ENCODE measurements at regions of chr12 and their contacts with region 1.

Region 1: DNA sequence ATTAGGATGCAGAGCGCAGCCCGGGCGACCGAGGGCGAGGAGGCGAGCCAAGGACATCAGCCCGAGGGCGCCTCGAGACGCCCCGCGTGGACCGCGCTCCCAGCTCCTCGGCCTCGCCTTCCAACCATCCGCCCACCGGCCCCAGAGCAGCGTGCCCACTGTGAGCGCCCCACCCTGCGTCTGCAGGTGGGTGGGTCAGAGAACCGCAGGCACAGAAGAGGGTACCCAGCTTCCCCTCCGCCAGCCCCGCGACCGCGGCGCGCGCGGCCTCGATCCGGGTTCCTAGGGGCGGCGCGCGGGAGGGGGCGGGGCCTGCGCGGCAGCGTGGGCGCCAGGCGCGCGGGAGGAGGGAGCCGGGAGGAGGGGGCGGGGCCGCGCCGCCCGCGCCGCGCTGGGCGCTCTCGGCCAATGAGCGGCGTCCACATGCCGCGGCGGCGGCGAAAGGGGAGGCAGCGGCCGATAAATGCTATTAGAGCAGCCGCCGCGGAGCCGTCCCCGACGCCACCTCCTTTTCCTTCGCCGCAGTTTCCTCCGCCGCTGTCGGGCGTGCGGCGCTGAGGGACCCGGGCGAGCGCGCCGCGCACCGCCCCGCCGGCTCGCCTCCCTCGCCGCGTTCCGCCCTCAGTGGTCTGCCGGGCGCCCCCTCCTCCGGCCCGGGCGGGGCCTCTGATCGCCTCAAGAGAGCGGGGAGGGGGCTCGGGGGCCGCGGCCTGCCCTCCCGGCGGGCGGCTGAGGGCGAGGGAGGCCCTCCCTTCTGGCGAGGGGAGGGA is at the start of gene ATP2A2:
- DNase-seq: peak; percentile 83 to 94
- H3K4me3 ChIP-seq: peak within 1 kb of the TSS; percentile 88 to 94
- H3K27ac ChIP-seq: peak within 1 kb of the TSS; percentile 97 to 100
- H3K4me1 ChIP-seq: peaks cover 0 to 60% (median 10%) of the 10 kb centered on the region in 4 donors
- H3K27me3 ChIP-seq: no peaks in the 10 kb centered on the region
- CTCF ChIP-seq: no peak

Region 2: GRCh38 chr12:110100315-110100970 is 180.5 kb before region 1 on chr12:
- intact Hi-C with region 1: loop called (anchors 5 kb)
- DNase-seq: peak; percentile 63 to 78
- H3K4me3 ChIP-seq: no peak overlapping the region
- H3K27ac ChIP-seq: peak overlapping the region; percentile 59 to 76
- H3K4me1 ChIP-seq: peaks cover 0 to 34% (median 12%) of the 10 kb centered on the region in 4 donors
- H3K27me3 ChIP-seq: peaks cover 0 to 2% of the 10 kb centered on the region in 2 donors
- CTCF ChIP-seq: peak; percentile 81 to 95

Region 3: GRCh38 chr12:110224379-110225304 is 56.3 kb before region 1 on chr12:
- intact Hi-C with region 1: loop called (anchors 10 kb)
- DNase-seq: peak in 1 of 2 donors; percentile 64
- H3K4me3 ChIP-seq: peak overlapping the region; percentile 24 to 29
- H3K27ac ChIP-seq: peak overlapping the region; percentile 72 to 78
- H3K4me1 ChIP-seq: peaks cover 0 to 52% (median 24%) of the 10 kb centered on the region in 4 donors
- H3K27me3 ChIP-seq: no peaks in the 10 kb centered on the region
- CTCF ChIP-seq: peak; percentile 71 to 77

Region 4: GRCh38 chr12:110253176-110253575 is 27.8 kb before region 1 on chr12:
- intact Hi-C with region 1: loop called (anchors 2 kb)
- DNase-seq: peak; percentile 60 to 88
- H3K4me3 ChIP-seq: peak overlapping the region in 1 of 2 donors; percentile 4
- H3K27ac ChIP-seq: peak overlapping the region; percentile 64 to 91
- H3K4me1 ChIP-seq: peaks cover 0 to 84% (median 44%) of the 10 kb centered on the region in 4 donors
- H3K27me3 ChIP-seq: no peaks in the 10 kb centered on the region
- CTCF ChIP-seq: no peak

Region 5: GRCh38 chr12:110421159-110421661 is 140.2 kb after region 1 on chr12:
- intact Hi-C with region 1: no loop called
- DNase-seq: no peak
- H3K4me3 ChIP-seq: no peak overlapping the region
- H3K27ac ChIP-seq: no peak overlapping the region
- H3K4me1 ChIP-seq: no peaks in the 10 kb centered on the region
- H3K27me3 ChIP-seq: no peaks in the 10 kb centered on the region
- CTCF ChIP-seq: no peak